ENCODE measurements at regions of chr14 and their contacts with region 1.

Region 1: GRCh38 chr14:22386924-22387775 is 201.9 kb downstream of the DAD1 start:
- DNase-seq: no peak
- H3K4me3 ChIP-seq: no peak overlapping the region
- H3K27ac ChIP-seq: no peak overlapping the region
- H3K4me1 ChIP-seq: peaks cover 0 to 40% (median 13%) of the 10 kb centered on the region in 3 donors
- H3K27me3 ChIP-seq: peaks cover 0 to 24% (median 0%) of the 10 kb centered on the region in 4 donors
- CTCF ChIP-seq: peak; percentile 60 to 85 (median 78)
- POLR2A ChIP-seq: no peak

Region 2: GRCh38 chr14:22177870-22178269 is 209.3 kb before region 1 on chr14:
- intact Hi-C with region 1: no loop called
- DNase-seq: no peak
- H3K4me3 ChIP-seq: no peak overlapping the region
- H3K27ac ChIP-seq: no peak overlapping the region
- H3K4me1 ChIP-seq: no peaks in the 10 kb centered on the region
- H3K27me3 ChIP-seq: no peaks in the 10 kb centered on the region
- CTCF ChIP-seq: no peak
- POLR2A ChIP-seq: no peak

Region 3: GRCh38 chr14:22448905-22449599 is 61.9 kb after region 1 on chr14:
- intact Hi-C with region 1: no loop called
- DNase-seq: no peak
- H3K4me3 ChIP-seq: no peak overlapping the region
- H3K27ac ChIP-seq: peak overlapping the region in 2 of 4 donors; percentile 1 to 67
- H3K4me1 ChIP-seq: no peaks in the 10 kb centered on the region
- H3K27me3 ChIP-seq: peaks cover 0 to 86% (median 0%) of the 10 kb centered on the region in 4 donors
- CTCF ChIP-seq: no peak
- POLR2A ChIP-seq: no peak

Region 4: DNA sequence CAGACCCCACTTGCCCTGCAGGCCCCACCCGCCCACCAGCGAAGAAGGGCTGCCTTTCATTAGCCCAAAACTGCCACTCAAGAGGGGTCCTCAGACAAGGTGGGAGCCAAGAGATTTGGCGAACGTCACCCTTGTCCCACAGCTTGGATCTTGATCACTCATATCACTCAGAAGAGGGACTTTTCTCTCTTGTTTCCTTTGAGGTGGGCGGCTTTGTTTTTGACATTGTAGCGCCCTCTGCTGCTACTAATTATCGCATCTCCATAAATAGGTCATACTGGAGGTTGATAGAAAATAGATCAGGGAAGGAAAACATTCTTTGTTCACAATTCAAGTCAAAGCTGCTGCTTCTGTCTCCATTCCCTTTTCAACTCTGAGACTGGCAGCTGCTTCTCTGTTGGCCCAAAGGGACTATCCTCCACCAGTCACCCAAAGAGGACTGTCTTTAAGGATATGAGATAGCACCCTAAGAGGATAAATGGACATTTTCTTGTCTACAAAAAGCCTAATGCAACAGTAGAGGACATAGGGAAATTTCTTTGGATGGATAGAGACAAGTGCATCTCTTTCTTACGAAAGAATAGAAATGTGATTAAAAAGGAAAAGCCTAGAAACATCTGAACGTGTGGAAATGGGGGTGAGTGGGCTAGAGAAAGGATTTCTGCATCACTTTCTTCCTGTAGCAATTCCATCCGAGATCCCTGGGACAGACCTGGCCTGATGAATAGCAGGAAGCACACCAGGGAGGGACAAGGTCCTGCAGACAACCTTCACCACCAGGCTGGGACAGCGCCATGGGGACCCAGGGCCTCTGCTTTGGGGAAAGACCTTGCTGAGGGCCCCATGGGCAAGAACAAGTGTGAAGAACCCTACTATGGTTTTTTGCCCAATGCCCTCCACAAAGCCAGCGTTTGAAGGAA is 86.0 kb after region 1 on chr14:
- intact Hi-C with region 1: loop called (anchors 5 kb)
- DNase-seq: no peak
- H3K4me3 ChIP-seq: no peak overlapping the region
- H3K27ac ChIP-seq: no peak overlapping the region
- H3K4me1 ChIP-seq: peaks cover 0 to 46% (median 7%) of the 10 kb centered on the region in 3 donors
- H3K27me3 ChIP-seq: peaks cover 0 to 31% (median 0%) of the 10 kb centered on the region in 4 donors
- CTCF ChIP-seq: peak; percentile 19 to 70 (median 54)
- POLR2A ChIP-seq: no peak

Region 5: GRCh38 chr14:22556990-22557623 is 170.0 kb after region 1 on chr14:
- intact Hi-C with region 1: loop called (anchors 10 kb)
- DNase-seq: no peak
- H3K4me3 ChIP-seq: peak overlapping the region in 3 of 4 donors; percentile 26 to 62 (median 41)
- H3K27ac ChIP-seq: peak overlapping the region; percentile 77 to 85 (median 80)
- H3K4me1 ChIP-seq: peaks cover 26 to 76% (median 50%) of the 10 kb centered on the region in 3 donors
- H3K27me3 ChIP-seq: no peaks in the 10 kb centered on the region
- CTCF ChIP-seq: peak; percentile 99 to 100 (median 100)
- POLR2A ChIP-seq: no peak

Measured in esophagus squamous epithelium (tissue), 5 donors.